Aorta (tissue), 5 donors: ENCODE measurements at regions of chr16 and their contacts with region 1.

Region 1: DNA sequence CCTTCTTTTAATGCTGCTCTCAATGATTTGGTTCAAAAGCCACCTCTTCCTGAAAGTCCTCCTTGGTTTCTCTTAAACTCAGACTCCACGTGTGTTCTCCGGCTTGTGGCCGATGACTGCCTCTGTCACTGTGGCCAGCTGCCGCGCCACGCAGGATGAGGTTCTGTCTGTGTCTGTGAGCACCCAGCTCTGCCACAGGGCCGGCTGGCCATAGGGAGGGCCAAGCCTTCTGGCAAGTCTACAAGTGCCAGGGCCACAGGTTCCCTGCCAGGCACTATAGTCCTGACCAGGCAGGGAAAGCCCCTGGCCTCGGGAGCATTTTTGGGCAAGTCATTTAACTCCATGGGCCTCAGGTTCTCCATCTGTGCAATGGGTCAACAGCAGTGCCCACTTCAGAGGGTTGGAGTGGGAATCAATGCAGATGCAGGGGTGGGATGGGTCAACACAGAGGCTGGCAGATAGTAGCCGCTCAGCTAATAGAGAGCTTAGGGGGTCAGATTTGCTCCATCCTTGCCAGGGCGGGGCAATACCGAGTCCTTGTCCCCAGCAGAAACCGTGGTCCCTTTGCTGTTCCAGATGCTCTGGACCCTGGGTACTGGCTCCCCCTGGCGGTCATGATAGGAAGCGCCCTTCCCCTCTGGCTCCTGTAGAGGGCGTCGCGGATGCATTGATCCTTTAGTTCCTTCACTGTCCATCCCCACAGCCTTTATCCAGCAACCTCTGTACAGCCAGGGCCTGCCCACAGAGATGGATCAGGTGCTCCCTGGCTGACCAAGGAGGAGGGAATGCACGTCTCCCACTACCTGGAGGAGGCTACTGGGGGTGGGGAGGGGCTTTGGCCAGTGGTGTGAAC is 19.3 kb upstream of the ADGRG3 start:
- DNase-seq: peak; percentile 75 to 89
- ATAC-seq: peak; percentile 80
- H3K4me3 ChIP-seq: no peak overlapping the region
- H3K27ac ChIP-seq: no peak overlapping the region
- H3K4me1 ChIP-seq: no peaks in the 10 kb centered on the region
- H3K27me3 ChIP-seq: no peaks in the 10 kb centered on the region

Region 2: DNA sequence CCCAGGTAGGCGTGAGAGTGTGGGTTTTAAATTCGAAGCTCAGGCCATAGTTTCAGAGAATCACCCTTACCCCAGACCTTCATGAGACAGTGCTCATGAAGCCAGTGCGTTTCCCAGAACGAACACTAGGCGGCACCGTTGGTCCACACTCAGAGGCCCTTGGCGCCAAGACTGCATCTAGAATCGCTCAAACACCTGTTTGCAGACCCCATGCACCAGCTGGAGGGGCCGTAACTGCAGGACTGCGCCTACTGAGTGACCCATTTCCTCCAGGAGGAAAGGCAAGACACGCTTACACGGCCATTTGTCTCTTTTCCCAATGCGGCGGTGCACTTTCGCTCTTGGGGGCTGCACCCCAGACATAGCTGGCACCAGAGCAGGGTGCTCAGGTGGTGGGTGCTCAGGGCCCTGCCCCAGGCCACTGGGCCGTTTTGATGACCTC is 72.4 kb before region 1 on chr16:
- intact Hi-C with region 1: loop called (anchors 2 to 5 kb)
- DNase-seq: peak; percentile 77 to 92
- ATAC-seq: peak; percentile 71
- H3K4me3 ChIP-seq: no peak overlapping the region
- H3K27ac ChIP-seq: no peak overlapping the region
- H3K4me1 ChIP-seq: no peaks in the 10 kb centered on the region
- H3K27me3 ChIP-seq: no peaks in the 10 kb centered on the region

Region 3: DNA sequence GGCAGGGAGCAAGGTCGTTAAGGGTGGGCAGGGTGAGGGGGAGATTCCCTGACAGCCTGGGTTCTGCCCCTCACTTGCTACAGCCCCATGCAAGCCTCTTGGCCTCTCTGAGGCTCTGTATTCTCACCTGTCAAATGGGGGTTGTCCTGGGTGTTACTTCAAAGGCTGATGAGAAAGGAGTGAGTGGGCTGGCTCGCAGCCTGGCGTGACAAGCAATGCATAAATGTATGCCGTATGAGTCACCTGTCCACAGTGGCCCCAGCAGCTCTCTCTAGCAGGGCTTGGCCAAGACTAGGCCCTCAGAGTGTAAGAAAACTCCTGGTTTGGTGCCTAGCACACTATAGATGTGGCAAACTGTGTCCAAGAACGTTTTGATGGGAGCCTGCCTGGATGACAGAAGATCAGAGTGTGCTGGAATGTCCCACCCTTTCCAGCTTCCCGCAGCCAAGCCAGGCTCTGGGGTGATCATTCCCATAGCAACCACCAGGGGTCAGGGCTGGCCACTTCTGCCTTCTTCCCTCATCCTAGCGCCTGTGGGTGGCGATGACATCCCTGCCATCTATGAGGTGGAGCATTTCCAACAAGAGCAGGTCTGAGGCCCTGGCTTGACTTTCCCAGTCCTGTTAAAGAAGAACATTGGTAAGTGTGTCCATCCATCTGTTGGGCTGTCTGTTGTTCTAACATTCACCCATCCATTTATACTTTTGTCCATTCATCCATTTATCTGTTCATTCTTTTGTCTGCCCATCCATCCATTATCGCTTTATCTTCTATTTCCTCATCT is 57.5 kb before region 1 on chr16:
- intact Hi-C with region 1: loop called in 1 of 2 experiments (anchors 5 kb)
- DNase-seq: peak; percentile 74 to 87
- ATAC-seq: peak; percentile 87
- H3K4me3 ChIP-seq: no peak overlapping the region
- H3K27ac ChIP-seq: no peak overlapping the region
- H3K4me1 ChIP-seq: no peaks in the 10 kb centered on the region
- H3K27me3 ChIP-seq: no peaks in the 10 kb centered on the region

Region 4: GRCh38 chr16:57609541-57610401 is 39.0 kb before region 1 on chr16:
- intact Hi-C with region 1: loop called in 1 of 2 experiments (anchors 5 kb)
- DNase-seq: peak in 1 of 2 donors; percentile 46
- ATAC-seq: no peak
- H3K4me3 ChIP-seq: no peak overlapping the region
- H3K27ac ChIP-seq: no peak overlapping the region
- H3K4me1 ChIP-seq: no peaks in the 10 kb centered on the region
- H3K27me3 ChIP-seq: no peaks in the 10 kb centered on the region